Panc1 (cell line): ENCODE measurements at regions of chr3 and their contacts with region 1.

Region 1: GRCh38 chr3:134473868-134474546 is 11.8 kb downstream of the ANAPC13 start:
- DNase-seq: no peak
- ATAC-seq: peak; percentile 91
- H3K4me3 ChIP-seq: no peak overlapping the region
- H3K27ac ChIP-seq: peak overlapping the region; percentile 72
- H3K4me1 ChIP-seq: peaks cover 3% of the 10 kb centered on the region
- H3K27me3 ChIP-seq: no peaks in the 10 kb centered on the region
- CTCF ChIP-seq: peak; percentile 85

Region 2: GRCh38 chr3:134212906-134213665 is 260.9 kb before region 1 on chr3:
- CTCF ChIA-PET with region 1: no interaction called
- POLR2A ChIA-PET with region 1: no interaction called
- in situ Hi-C with region 1: no loop called
- intact Hi-C with region 1: loop called (anchors 5 kb)
- DNase-seq: peak; percentile 60
- ATAC-seq: peak; percentile 97
- H3K4me3 ChIP-seq: no peak overlapping the region
- H3K27ac ChIP-seq: no peak overlapping the region
- H3K4me1 ChIP-seq: peaks cover 6% of the 10 kb centered on the region
- H3K27me3 ChIP-seq: no peaks in the 10 kb centered on the region
- CTCF ChIP-seq: peak; percentile 100

Region 3: DNA sequence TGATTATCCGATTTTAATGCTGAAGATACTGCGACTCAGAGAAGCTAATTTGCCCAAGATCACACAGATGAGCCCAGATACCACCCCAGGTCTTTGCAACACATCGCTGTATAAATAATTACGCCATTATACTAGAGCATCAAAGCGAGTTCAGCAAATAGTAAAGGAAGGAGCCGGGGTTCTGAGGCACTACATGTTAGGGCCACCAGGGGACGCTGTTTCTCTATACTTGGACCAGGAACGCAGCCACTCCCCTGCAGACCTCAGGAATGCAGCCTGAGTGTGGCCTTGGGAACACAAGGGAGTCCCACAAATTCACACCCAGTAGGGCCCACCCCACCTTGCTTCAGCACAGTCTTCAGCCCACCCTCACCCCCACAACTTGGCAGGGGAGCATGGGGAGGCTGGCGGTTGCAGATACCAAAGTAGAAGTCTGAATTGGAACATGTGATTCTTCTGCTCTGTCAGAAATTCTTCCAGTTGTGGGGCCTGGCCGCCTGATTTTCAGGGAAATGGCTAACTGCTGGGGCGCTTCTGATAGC is 165.6 kb before region 1 on chr3:
- CTCF ChIA-PET with region 1: interaction called, 16 read pairs
- POLR2A ChIA-PET with region 1: no interaction called
- in situ Hi-C with region 1: no loop called
- intact Hi-C with region 1: loop called (anchors 1 kb)
- DNase-seq: peak; percentile 84
- ATAC-seq: peak; percentile 83
- H3K4me3 ChIP-seq: peak overlapping the region in 1 of 2 experiments; percentile 46; a peak in 2 of 4 replicates
- H3K27ac ChIP-seq: peak overlapping the region; percentile 88
- H3K4me1 ChIP-seq: peaks cover 47% of the 10 kb centered on the region
- H3K27me3 ChIP-seq: no peaks in the 10 kb centered on the region
- CTCF ChIP-seq: peak; percentile 100

Region 4: DNA sequence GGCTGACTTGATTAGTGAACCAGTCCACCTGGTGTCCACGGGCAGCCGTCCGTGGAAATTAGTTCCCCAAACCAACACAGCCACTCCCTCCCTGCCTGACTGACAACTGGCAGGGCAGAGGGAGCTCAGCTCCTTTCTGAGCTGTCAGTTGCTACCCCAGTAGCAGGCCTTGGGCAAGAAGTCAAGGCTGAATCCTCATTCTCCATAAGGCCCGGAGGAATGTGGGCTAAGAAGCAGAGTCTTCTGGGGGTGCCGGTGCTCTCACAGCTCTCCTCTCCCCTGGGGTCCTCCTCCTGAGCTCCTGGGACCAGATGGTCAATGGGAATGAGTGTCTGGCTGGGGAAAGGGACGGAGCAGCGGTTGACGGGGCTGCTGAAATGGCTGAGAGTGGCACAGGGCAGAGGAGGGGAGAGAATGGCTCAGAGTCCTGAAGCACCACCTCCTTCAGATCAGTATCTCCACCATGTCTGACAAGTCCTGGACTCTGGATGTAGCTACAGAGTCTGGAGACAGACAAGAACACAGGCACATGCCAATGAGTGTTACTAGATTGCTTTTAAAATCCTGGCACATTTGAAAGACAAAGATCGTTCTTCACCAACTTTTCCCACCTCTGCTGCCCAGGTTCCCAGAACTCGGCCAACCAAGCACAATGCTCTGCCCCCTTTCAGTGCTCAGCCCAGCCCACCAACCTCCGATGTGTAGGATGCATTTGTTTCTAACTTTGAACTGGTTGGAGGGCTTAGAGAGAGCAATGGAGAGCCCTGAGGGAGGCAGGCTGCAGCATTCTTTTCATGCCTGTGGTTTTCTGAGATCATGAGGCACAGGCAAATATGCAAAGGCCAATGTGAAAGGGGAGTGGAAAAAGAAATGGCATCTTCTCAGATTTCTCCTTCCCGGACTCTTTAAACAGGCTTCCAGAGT is 116.5 kb before region 1 on chr3:
- CTCF ChIA-PET with region 1: interaction called, 14 read pairs
- POLR2A ChIA-PET with region 1: no interaction called
- in situ Hi-C with region 1: no loop called
- intact Hi-C with region 1: loop called (anchors 5 kb)
- DNase-seq: no peak
- ATAC-seq: peak; percentile 72
- H3K4me3 ChIP-seq: 0 out of 4 replicates have a peak overlapping the region, but pooled peaks of 1 of the 2 experiments have one; percentile 2
- H3K27ac ChIP-seq: peak overlapping the region; percentile 96
- H3K4me1 ChIP-seq: peaks cover 99% of the 10 kb centered on the region
- H3K27me3 ChIP-seq: no peaks in the 10 kb centered on the region
- CTCF ChIP-seq: no peak

Region 5: DNA sequence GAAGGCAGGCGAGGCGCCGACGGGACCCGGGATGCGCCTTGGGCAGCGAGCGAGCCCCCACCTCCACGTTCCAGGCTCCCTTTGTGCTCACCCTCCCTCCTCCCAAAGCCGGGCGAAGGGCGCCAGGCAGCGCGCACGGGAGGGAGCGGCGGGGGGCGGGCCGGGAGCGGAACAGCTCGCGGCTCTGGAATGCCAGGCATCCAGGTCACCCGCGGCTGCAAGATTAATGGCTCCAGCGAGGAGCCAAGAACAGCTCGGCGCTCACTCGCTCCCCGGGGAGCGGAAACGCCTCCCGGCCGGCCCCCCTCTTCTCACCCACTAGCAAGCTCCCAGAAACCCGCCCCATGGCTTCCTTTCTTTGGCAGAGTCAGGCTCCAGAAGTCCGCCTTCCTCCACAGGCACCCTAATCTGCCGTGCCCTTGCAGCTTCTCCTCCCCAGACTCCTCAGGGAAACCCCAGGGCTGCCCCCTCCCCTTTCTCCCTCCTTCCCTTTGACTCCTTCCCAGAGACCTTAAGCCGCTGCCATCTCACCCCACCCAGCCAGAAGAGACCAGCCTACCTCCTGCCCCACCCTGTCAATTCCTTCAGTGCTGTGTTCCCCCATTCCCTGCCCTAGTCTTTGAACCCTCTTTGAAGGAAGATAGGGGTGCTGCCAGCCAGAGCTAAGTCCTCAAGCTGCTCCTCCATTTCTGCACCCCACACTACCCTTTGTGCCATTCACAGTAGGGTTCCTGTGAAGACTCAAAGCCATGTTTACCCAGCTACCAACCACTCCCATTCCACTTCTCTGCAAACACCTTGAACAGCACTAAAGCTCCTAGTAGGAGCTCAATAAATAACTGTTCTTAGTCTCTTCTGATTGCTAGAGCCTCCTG is 109.7 kb before region 1 on chr3:
- CTCF ChIA-PET with region 1: interaction called, 14 read pairs
- POLR2A ChIA-PET with region 1: interaction called, 6 read pairs
- in situ Hi-C with region 1: no loop called
- intact Hi-C with region 1: loop called (anchors 5 kb)
- DNase-seq: no peak
- ATAC-seq: peak; percentile 85
- H3K4me3 ChIP-seq: peak overlapping the region in 1 of 2 experiments; percentile 30; a peak in 2 of 4 replicates
- H3K27ac ChIP-seq: peak overlapping the region; percentile 94
- H3K4me1 ChIP-seq: peaks cover 99% of the 10 kb centered on the region
- H3K27me3 ChIP-seq: no peaks in the 10 kb centered on the region
- CTCF ChIP-seq: no peak

Region 6: GRCh38 chr3:134373994-134374790 is 99.8 kb before region 1 on chr3 and contains the start of gene AMOTL2:
- CTCF ChIA-PET with region 1: interaction called, 4 read pairs
- POLR2A ChIA-PET with region 1: interaction called, 3 read pairs
- in situ Hi-C with region 1: no loop called
- intact Hi-C with region 1: loop called (anchors 5 kb)
- DNase-seq: peak; percentile 67
- ATAC-seq: peak; percentile 84
- H3K4me3 ChIP-seq: peak within 1 kb of the TSS; percentile 87 to 95
- H3K27ac ChIP-seq: peak within 1 kb of the TSS; percentile 94
- H3K4me1 ChIP-seq: peaks cover 65% of the 10 kb centered on the region
- H3K27me3 ChIP-seq: no peaks in the 10 kb centered on the region
- CTCF ChIP-seq: no peak
- total RNA-seq, gene AMOTL2: 146 TPM